Aorta (tissue), 5 donors: ENCODE measurements at regions of chr6 and their contacts with region 1.

Region 1: DNA sequence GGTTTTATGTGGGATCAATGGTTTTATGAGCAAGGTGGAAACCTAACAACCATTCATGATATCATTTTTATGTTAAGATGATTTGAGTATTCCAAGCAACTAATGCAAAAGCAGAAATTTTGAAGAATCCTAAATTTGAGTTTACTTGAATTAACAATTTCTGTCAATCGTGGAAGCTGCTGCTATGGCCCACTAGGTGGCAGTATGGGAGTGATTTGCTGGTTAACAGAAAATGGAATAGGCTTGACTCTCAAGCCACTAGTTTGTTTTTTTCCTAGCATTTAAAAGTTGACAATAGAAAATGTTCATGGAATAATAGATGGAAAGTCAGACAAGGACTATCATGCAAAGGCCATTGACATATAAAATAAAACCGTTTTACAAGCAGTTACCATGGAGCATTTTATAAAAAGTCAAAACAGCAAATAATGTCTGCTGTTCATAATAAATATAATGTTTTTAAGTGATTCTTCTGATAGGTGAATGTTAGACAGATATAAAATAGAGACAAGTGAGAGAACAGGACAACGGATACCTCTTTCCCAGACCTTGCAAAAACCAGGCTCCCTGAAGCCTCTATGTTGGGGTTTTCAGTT is 43.0 kb upstream of the TMEM200A start:
- DNase-seq: no peak
- ATAC-seq: no peak
- H3K4me3 ChIP-seq: no peak overlapping the region
- H3K27ac ChIP-seq: no peak overlapping the region
- H3K4me1 ChIP-seq: no peaks in the 10 kb centered on the region
- H3K27me3 ChIP-seq: peaks cover 0 to 2% of the 10 kb centered on the region in 2 donors

Region 2: DNA sequence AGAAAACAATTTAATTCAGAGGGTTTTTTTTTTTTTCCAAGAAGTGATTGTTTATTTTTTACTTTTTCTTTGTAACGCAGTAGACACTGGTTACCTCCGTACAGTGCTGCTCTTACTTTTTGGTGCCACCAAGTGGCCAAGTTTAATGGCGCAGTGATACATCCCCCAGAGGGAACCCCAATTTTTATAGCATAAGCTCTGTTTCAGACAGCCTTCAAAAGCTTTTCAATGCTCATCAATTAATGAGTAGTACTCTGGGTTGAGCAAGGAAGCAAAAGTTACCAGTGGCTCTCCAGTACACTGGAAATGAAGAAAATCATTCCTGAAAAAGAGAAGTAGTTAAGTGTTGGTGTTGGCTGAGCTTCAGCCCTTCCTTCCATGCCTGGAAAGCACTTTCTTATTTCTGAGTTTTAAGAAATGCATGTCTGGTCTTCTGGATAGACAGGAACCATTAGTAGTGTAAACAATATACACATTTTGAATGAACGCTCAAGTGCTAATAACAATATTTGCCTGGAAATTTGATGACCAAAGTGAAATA is 375.3 kb after region 1 on chr6:
- intact Hi-C with region 1: loop called (anchors 2 to 10 kb)
- DNase-seq: no peak
- ATAC-seq: peak; percentile 79
- H3K4me3 ChIP-seq: no peak overlapping the region
- H3K27ac ChIP-seq: no peak overlapping the region
- H3K4me1 ChIP-seq: no peaks in the 10 kb centered on the region
- H3K27me3 ChIP-seq: no peaks in the 10 kb centered on the region

Region 3: DNA sequence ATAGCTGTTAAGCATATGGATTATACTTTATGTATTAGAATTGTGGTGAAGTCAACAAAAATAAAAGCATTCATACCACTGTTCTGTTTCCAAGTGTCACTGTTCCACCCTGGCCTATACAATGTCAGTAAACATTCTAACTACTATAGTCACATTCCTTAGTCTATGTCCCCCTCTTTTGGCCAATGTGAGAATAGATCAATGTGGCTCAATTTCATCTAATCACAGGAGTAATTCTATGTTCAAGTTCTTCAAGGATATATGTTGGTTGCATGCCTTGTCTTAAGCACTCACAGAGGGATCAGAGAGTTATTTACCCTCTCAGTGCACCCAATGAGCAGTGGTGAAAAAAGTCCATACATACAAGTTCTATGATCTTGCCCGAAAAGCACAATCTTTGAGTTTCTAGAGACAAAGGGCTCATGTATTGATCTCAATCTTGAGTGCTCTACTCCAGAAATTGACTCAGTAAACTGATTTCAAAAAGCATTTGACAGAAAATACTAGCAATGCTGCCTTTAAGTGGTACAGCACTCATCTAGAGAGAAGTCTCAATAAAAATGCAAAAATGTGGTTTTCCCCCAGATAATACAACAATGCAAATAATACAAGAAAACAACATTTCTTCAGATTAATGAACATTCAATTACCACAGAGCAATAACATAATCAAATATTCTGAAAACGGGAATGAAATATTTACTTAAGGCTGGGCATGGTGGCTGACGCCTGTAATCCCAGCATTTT is 521.0 kb after region 1 on chr6:
- intact Hi-C with region 1: loop called in 1 of 2 experiments (anchors 10 kb)
- DNase-seq: no peak
- ATAC-seq: peak; percentile 42
- H3K4me3 ChIP-seq: no peak overlapping the region
- H3K27ac ChIP-seq: no peak overlapping the region
- H3K4me1 ChIP-seq: no peaks in the 10 kb centered on the region
- H3K27me3 ChIP-seq: no peaks in the 10 kb centered on the region

Region 4: GRCh38 chr6:130872250-130873095 is 549.7 kb after region 1 on chr6:
- intact Hi-C with region 1: loop called (anchors 2 to 5 kb)
- DNase-seq: peak; percentile 71 to 90
- ATAC-seq: peak; percentile 73
- H3K4me3 ChIP-seq: no peak overlapping the region
- H3K27ac ChIP-seq: no peak overlapping the region
- H3K4me1 ChIP-seq: no peaks in the 10 kb centered on the region
- H3K27me3 ChIP-seq: no peaks in the 10 kb centered on the region

Region 5: DNA sequence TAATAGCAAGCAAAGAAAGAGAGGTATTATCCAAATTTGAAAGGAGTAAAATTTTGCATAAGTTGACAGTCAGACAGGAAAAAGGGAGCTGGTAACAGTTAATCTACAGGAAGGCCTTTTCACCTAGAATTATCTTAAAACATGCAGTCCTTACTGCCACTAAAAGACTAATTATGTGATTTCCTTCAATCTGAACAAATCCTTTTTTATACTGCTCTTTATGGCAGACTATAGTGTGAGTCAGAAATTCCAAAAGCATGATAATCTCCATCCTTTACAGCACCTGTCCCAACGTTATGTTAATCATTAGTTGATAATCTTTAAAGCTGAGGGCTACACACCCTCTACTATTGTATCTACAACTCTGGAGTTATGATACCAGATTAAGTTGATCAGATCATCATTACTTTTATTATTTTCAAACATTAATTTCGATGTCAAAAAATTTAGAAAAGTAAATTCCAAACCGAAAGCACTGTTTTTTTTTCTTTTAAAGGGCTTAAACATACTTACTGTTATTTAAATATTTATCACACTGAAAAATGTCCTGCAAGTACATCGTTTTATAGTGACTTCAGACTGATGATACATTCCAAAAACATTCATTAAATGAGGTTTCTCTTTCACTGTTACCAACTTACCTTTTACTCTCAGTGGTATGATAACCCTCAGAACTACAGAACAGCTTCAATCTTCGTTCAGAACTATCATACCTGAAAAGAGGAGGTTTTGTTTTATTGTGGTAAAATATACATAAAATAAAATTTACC is 779.3 kb after region 1 on chr6:
- intact Hi-C with region 1: no loop called
- DNase-seq: no peak
- ATAC-seq: no peak
- H3K4me3 ChIP-seq: no peak overlapping the region
- H3K27ac ChIP-seq: no peak overlapping the region
- H3K4me1 ChIP-seq: no peaks in the 10 kb centered on the region
- H3K27me3 ChIP-seq: no peaks in the 10 kb centered on the region